Common myeloid progenitor, CD34-positive (primary cell): ENCODE measurements at regions of chr17 and their contacts with region 1.

Region 1: GRCh38 chr17:8109661-8110464 is 8.5 kb downstream of the ALOXE3 start:
- DNase-seq: peak; percentile 55 to 76 (median 71)
- H3K4me3 ChIP-seq: peak overlapping the region in 6 of 7 experiments; percentile 8 to 75 (median 57)
- H3K27ac ChIP-seq: no peak overlapping the region
- H3K4me1 ChIP-seq: peaks cover 0 to 21% (median 16%) of the 10 kb centered on the region in 4 experiments
- H3K27me3 ChIP-seq: peaks cover 2 to 16% (median 2%) of the 10 kb centered on the region in 5 experiments

Region 2: DNA sequence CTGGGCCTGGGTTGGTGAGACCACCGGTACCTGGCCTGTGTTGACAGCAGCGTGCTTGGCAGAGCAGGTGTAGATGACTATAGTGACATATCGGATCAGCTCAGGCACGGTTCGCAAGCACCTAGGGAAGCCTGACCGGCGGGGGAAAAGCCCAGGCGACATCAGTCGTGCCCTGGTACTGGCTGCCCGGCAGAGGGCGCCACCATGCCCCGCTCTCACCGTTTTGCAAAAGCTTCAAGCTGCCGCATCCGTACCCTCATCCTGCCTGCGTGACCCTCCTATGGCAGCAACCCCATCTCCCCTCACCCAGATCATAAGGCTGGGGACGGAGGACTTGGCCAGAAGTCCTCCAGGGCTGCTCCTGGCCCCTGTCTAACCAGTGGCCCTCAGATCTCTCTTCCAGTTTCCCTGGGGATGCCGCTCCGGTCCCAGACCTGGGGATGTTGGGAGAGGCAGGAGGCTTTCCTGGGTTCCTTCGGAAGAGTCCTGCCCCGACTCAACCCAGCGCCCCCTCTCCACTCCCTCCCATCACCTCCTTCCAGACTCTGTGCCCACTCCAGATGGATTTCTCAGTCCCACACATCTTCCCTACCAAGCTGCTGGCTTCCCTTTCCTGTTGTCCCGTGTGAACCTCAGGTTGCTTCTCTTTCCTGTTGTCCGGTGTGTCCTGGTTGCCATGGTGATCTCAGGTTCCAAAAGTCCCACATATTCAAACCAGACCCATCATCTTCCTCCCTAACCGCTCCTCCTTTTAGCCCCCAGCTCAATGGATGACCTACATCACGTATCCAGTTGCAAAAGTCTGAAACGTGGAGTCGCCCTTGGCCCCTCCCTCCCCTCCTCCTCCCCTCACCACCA is 36.0 kb before region 1 on chr17:
- CTCF ChIA-PET with region 1: interaction called, 36 read pairs
- POLR2A ChIA-PET with region 1: no interaction called
- DNase-seq: peak; percentile 82 to 86 (median 85)
- H3K4me3 ChIP-seq: peak overlapping the region in 3 of 7 experiments; percentile 11 to 63 (median 58)
- H3K27ac ChIP-seq: no peak overlapping the region
- H3K4me1 ChIP-seq: peaks cover 0 to 23% (median 17%) of the 10 kb centered on the region in 4 experiments
- H3K27me3 ChIP-seq: peaks cover 0 to 49% (median 33%) of the 10 kb centered on the region in 5 experiments

Region 3: DNA sequence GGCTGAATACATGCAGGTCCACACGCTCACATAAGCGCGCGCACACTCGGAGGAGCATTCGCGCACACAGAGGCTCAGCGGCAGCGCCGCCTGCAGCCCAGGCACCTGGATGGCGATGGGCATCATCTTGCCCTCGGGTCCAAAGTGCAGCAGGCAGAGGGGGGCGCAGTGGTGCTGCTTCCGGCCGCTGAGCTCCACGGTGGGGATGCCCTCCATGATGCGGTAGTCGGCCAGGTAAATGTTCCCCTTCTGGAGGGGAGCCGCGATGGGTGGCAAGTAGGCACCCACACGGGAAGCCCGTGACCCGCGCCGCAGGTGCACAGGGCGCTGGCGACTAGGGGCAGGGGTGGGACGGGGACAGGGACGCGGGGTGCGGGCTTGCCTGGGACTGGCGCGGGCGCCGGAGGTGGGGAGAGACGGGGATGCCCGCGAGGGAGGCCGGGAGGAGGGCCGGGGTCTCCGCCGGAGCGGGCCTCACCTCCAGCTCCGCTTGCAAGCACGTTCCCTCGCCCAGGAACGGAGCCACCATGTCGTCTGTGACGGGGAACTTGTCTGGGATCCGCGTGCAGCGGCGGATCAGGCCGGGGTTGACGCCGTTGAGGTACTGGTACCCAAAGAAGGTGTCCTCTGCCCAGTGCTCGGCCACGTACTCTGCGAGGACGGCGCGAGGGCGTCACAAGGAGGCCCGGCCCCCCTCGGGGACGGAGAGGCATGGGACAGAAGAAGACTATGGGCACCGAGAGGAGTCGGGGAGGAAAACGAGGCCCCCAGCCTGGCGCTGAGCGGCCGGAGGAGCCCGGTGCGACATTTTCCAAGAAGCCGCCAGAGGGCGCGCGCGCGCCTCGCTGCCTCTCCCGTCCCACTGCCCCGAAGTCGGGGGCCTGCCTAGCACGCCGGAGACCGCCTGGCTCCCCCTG is 30.3 kb before region 1 on chr17:
- CTCF ChIA-PET with region 1: interaction called, 14 read pairs
- POLR2A ChIA-PET with region 1: no interaction called
- DNase-seq: peak; percentile 78 to 90 (median 88)
- H3K4me3 ChIP-seq: peak overlapping the region; percentile 31 to 84 (median 55)
- H3K27ac ChIP-seq: no peak overlapping the region
- H3K4me1 ChIP-seq: peaks cover 0 to 14% (median 12%) of the 10 kb centered on the region in 4 experiments
- H3K27me3 ChIP-seq: peaks cover 0 to 12% (median 8%) of the 10 kb centered on the region in 5 experiments

Region 4: GRCh38 chr17:8091033-8091687 is 18.7 kb before region 1 on chr17:
- CTCF ChIA-PET with region 1: interaction called, 206 read pairs
- POLR2A ChIA-PET with region 1: interaction called, 5 read pairs
- DNase-seq: peak in 2 of 3 donors; percentile 41 to 46
- H3K4me3 ChIP-seq: no peak overlapping the region
- H3K27ac ChIP-seq: no peak overlapping the region
- H3K4me1 ChIP-seq: peaks cover 0 to 8% (median 5%) of the 10 kb centered on the region in 4 experiments
- H3K27me3 ChIP-seq: peaks cover 0 to 18% (median 10%) of the 10 kb centered on the region in 5 experiments

Region 5: DNA sequence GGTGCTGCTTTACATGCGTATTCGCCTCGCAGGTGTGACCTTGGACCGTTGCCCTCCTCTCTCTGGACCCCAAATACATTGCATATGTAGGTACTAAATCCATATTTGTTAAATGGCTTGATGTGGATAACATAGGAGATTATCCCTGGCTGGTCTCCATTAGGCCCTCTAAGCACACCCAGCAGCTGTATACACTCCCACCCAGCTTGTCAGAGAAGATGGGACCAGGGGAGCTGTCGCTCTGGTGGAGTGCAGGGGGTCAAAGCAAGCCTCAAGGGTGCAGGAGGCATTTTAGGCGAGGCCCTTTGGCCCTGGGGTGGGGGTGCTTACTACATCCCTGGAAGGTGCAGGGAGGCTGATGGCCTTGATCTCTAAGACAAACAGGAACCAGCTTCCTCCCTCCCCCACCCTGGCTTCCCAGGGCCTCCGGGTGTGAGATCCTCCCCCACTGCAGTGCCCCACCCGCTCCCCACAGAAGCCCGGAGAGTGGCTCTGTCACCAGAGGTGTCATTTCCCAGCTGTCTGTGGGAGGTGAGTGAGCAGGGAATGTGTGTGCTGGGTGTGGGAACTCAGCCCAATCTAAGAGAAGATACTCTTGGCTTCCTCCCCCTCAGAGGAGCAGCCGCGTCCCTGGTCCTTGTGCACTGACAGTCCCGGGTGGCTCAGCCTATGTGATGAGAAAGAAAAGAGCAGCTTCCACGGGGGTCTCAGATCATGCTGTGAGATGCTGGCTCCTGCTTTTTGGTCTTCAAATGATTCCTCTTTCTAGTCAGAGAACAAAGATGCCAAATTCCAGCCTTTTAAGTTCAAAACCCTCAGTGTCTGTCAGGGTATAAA is 54.3 kb after region 1 on chr17:
- CTCF ChIA-PET with region 1: no interaction called
- POLR2A ChIA-PET with region 1: no interaction called
- DNase-seq: peak; percentile 39 to 71 (median 70)
- H3K4me3 ChIP-seq: peak overlapping the region in 5 of 7 experiments; percentile 9 to 96 (median 90)
- H3K27ac ChIP-seq: peak overlapping the region in 1 of 2 experiments; percentile 88
- H3K4me1 ChIP-seq: peaks cover 4 to 42% (median 36%) of the 10 kb centered on the region in 4 experiments
- H3K27me3 ChIP-seq: no peaks in the 10 kb centered on the region